Naive thymus-derived CD4-positive, alpha-beta T cell (primary cell): ENCODE measurements at regions of chr4 and their contacts with region 1.

Region 1: GRCh38 chr4:100742045-100742444 is 224.2 kb upstream of the EMCN start:
- DNase-seq: peak in 3 of 9 donors; percentile 2 to 4 (median 3)
- ATAC-seq: no peak
- H3K4me3 ChIP-seq: no peak overlapping the region
- H3K4me3 Mint-ChIP-seq: no peak overlapping the region
- H3K27ac ChIP-seq: no peak overlapping the region
- H3K27ac Mint-ChIP-seq: no peak overlapping the region
- H3K4me1 ChIP-seq: no peaks in the 10 kb centered on the region
- H3K4me1 Mint-ChIP-seq: peaks cover 0 to 1% (median 0%) of the 10 kb centered on the region in 7 donors
- H3K27me3 ChIP-seq: no peaks in the 10 kb centered on the region
- H3K27me3 Mint-ChIP-seq: peaks cover 0 to 7% (median 5%) of the 10 kb centered on the region in 5 donors

Region 2: GRCh38 chr4:100372432-100372831 is 369.6 kb before region 1 on chr4:
- CTCF ChIA-PET with region 1: no interaction called
- POLR2A ChIA-PET with region 1: no interaction called
- intact Hi-C with region 1: loop called in 1 of 2 experiments (anchors 2 kb)
- DNase-seq: peak in 1 of 9 donors; percentile 1
- ATAC-seq: no peak
- H3K4me3 ChIP-seq: no peak overlapping the region
- H3K4me3 Mint-ChIP-seq: no peak overlapping the region
- H3K27ac ChIP-seq: no peak overlapping the region
- H3K27ac Mint-ChIP-seq: no peak overlapping the region
- H3K4me1 ChIP-seq: no peaks in the 10 kb centered on the region
- H3K4me1 Mint-ChIP-seq: no peaks in the 10 kb centered on the region
- H3K27me3 ChIP-seq: no peaks in the 10 kb centered on the region
- H3K27me3 Mint-ChIP-seq: peaks cover 0 to 5% (median 0%) of the 10 kb centered on the region in 5 donors